GM12878 (cell line): ENCODE measurements at regions of chr1 and their contacts with region 1.

Region 1: DNA sequence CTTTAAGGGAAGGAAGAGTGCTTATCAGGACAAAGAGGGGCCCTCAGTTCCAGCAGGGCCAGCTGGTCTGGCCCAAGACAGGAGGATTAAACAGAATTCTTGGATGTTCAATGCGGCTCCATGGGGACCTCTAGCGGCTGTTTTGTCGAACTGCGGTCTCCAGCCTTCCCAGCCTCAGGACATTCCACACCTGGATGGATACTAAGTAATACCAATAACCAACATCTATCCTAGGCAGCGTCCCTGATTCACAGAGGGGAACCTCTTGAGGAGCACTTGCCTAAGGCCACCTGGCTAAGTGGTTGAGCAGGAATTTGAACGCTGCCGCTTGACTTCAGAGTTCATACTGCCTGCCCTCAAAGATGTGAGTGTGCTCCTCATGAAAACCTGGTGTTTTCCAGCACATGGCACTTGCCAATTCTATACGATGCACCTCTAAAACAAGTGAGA is 15.5 kb upstream of the CD247 start:
- DNase-seq: no peak
- ATAC-seq: peak; percentile 90
- H3K4me3 ChIP-seq: no peak overlapping the region
- H3K27ac ChIP-seq: no peak overlapping the region
- H3K4me1 ChIP-seq: peaks cover 4% of the 10 kb centered on the region
- H3K27me3 ChIP-seq: no peaks in the 10 kb centered on the region
- CTCF ChIP-seq: peak; percentile 82 to 87 (median 85)
- EP300 ChIP-seq: no peak
- POLR2A ChIP-seq: no peak
- RAD21 ChIP-seq: peak; percentile 85

Region 2: GRCh38 chr1:167066333-167067122 is 467.3 kb before region 1 on chr1:
- CTCF ChIA-PET with region 1: interaction called, 22 read pairs
- POLR2A ChIA-PET with region 1: no interaction called
- RAD21 ChIA-PET with region 1: interaction called, 6 read pairs
- SMC1A ChIA-PET with region 1: interaction called, 9 read pairs
- in situ Hi-C with region 1: loop called (anchors 5 kb)
- intact Hi-C with region 1: loop called (anchors 5 kb)
- DNase-seq: no peak
- ATAC-seq: peak; percentile 97
- H3K4me3 ChIP-seq: peak overlapping the region; percentile 70; the same call in 1 of the 2 replicates
- H3K27ac ChIP-seq: no peak overlapping the region
- H3K4me1 ChIP-seq: no peaks in the 10 kb centered on the region
- H3K27me3 ChIP-seq: no peaks in the 10 kb centered on the region; a peak in 1 of 4 replicates
- CTCF ChIP-seq: peak; percentile 92 to 98 (median 97); a peak in 5 of 6 replicates
- EP300 ChIP-seq: no peak
- POLR2A ChIP-seq: no peak
- RAD21 ChIP-seq: peak; percentile 87

Region 3: GRCh38 chr1:167409183-167409582 is 124.7 kb before region 1 on chr1:
- CTCF ChIA-PET with region 1: interaction called, 13 read pairs
- POLR2A ChIA-PET with region 1: no interaction called
- RAD21 ChIA-PET with region 1: interaction called, 5 read pairs
- SMC1A ChIA-PET with region 1: interaction called, 29 read pairs
- in situ Hi-C with region 1: no loop called
- intact Hi-C with region 1: no loop called
- DNase-seq: no peak
- ATAC-seq: peak; percentile 72
- H3K4me3 ChIP-seq: no peak overlapping the region
- H3K27ac ChIP-seq: no peak overlapping the region
- H3K4me1 ChIP-seq: no peaks in the 10 kb centered on the region
- H3K27me3 ChIP-seq: no peaks in the 10 kb centered on the region
- CTCF ChIP-seq: peak in 2 of 3 experiments; percentile 34 to 40; a peak in 4 of 6 replicates
- EP300 ChIP-seq: no peak
- POLR2A ChIP-seq: no peak
- RAD21 ChIP-seq: peak; percentile 44

Region 4: DNA sequence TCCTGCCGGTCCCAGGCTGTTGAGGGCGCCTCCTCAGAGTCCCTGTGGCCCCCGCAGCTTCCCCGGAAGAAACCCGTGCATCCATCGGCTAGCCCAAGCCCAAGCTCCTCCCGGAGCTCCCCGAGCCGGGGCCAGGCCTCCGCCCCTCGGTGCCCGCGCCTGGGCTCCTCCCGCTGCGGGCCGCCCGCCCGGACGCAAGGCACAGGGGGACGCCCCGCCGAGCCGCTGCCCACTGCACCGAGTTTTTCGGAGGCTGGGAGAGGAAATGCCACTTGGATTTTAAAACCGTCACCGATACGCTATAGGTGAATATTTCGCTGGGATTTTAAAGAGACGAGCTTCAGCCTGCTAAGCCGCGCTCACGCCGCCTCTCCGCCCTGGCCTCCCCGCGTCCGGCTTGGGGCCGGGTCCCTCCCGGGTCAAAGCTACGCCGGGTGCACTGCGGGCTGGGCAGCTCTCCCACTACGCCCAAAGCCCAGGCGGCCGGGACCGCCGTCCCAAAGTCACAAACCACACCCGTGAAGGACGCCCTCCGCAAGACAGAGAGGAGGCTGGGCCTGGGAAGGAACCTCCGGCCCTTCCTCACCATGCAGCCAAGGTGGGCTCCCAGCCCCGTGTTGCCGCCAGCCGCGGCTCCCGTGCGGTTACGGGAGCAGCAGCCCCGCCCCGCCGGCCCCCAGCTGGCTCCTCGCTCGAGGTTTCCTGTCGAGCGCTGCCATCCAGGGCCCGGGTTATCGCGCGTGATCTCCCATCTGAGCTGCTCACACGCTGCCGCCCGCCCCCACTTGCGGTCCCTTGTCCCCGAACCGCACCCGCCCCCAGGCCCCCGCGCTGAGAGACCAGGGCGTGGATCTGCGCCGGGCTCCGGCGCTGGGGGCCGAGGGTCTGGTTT is 78.7 kb before region 1 on chr1:
- CTCF ChIA-PET with region 1: interaction called, 32 read pairs
- POLR2A ChIA-PET with region 1: no interaction called
- RAD21 ChIA-PET with region 1: interaction called, 35 read pairs
- SMC1A ChIA-PET with region 1: interaction called, 34 read pairs
- in situ Hi-C with region 1: no loop called
- intact Hi-C with region 1: loop called (anchors 5 kb)
- DNase-seq: no peak
- ATAC-seq: peak; percentile 79
- H3K4me3 ChIP-seq: peak overlapping the region; percentile 80
- H3K27ac ChIP-seq: peak overlapping the region; percentile 20; the same call in 1 of the 2 replicates
- H3K4me1 ChIP-seq: peaks cover 5% of the 10 kb centered on the region
- H3K27me3 ChIP-seq: no peaks in the 10 kb centered on the region
- CTCF ChIP-seq: no peak
- EP300 ChIP-seq: no peak; a peak in 1 of 4 replicates
- POLR2A ChIP-seq: peak; percentile 37
- RAD21 ChIP-seq: no peak

Region 5: DNA sequence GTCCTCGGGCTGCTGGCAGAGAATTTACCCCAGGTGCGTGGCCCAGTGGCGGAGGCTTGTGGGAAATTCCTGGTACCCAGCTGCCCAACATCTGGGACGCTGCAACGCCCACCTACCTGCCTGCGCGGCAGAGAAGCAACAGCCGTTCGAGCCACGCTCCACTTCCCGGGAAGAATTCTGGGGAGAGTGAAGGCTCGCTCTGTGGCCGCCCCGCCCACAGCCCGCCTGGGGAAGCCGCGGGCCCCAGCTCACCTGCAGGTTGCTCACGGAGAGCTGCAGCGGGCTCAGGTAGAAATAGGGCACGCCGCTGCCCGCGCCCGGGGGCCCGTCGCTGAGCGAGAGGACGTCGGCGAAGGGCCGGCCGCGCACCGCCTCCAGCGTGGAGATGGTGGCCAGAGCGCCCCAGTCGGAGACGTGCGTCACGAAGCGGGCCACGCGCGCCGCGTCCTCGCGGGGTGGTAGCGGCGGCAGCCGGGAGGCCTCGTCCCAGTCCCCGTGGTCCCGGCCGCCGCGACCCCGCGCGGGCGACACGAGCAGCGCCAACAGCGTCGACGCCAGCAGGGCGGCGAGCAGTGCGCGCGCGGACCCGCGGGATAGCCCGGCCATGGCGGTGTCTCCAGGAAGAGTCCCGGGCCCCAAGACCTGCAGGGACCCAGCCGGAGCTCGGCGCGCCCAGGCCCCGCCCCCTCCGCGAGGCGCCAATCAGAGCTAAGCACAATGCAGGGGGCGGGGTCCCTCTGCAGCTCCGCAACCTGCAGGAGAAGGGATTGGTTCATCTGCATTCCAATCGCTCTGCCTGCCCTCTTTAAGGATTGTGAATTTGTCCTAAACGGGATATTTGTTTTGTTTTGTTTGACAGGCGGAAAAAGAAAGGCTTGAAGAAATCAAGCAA is 19.5 kb after region 1 on chr1 and contains the start of gene CREG1:
- CTCF ChIA-PET with region 1: interaction called, 262 read pairs
- POLR2A ChIA-PET with region 1: interaction called, 3 read pairs
- RAD21 ChIA-PET with region 1: interaction called, 70 read pairs
- SMC1A ChIA-PET with region 1: interaction called, 14 read pairs
- in situ Hi-C with region 1: no loop called
- intact Hi-C with region 1: no loop called
- DNase-seq: no peak
- ATAC-seq: peak; percentile 97
- H3K4me3 ChIP-seq: peak within 1 kb of the TSS; percentile 72
- H3K27ac ChIP-seq: peak within 1 kb of the TSS; percentile 51
- H3K4me1 ChIP-seq: peaks cover 9% of the 10 kb centered on the region
- H3K27me3 ChIP-seq: no peaks in the 10 kb centered on the region
- CTCF ChIP-seq: no peak
- EP300 ChIP-seq: no peak
- POLR2A ChIP-seq: peak; percentile 93
- RAD21 ChIP-seq: no peak
- polyA plus RNA-seq, gene CREG1: 5.3 to 11.3 TPM